ENCODE measurements at regions of chr5 and their contacts with region 1.

Region 1: DNA sequence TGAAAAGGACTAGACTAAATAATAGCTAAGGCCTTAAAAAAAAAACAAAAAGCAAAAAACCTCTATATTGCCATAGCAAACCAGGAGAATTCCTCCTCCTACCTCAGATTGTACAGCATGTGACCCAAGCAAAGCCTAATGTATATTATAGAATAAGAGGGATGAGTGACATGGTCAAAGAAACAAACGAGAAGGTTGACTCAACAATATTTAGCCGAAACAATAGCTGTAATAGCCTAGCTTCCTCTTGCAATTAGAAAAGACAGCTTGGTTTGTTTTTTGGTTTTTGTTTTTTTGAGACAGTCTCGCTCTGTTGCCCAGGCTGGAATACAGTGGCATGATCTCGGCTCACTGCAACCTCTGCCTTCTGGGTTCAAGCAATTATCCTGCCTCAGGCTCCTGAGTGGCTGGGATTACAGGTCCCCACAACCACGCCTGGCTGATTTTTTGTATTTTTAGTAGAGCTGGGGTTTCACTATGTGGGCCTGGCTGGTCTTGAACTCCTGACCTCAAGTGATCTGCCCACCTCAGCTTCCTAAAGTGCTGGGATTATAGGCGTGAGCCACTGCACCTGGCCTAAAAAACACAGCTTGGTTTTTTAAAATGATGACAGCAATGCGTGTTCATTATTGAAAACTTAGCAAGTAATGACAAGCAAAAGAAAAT is 5.6 kb downstream of the NLN start:
- DNase-seq: no peak
- H3K4me3 ChIP-seq: no peak overlapping the region
- H3K27ac ChIP-seq: no peak overlapping the region
- H3K4me1 ChIP-seq: peaks cover 2 to 16% (median 7%) of the 10 kb centered on the region in 4 experiments
- H3K27me3 ChIP-seq: no peaks in the 10 kb centered on the region

Region 2: DNA sequence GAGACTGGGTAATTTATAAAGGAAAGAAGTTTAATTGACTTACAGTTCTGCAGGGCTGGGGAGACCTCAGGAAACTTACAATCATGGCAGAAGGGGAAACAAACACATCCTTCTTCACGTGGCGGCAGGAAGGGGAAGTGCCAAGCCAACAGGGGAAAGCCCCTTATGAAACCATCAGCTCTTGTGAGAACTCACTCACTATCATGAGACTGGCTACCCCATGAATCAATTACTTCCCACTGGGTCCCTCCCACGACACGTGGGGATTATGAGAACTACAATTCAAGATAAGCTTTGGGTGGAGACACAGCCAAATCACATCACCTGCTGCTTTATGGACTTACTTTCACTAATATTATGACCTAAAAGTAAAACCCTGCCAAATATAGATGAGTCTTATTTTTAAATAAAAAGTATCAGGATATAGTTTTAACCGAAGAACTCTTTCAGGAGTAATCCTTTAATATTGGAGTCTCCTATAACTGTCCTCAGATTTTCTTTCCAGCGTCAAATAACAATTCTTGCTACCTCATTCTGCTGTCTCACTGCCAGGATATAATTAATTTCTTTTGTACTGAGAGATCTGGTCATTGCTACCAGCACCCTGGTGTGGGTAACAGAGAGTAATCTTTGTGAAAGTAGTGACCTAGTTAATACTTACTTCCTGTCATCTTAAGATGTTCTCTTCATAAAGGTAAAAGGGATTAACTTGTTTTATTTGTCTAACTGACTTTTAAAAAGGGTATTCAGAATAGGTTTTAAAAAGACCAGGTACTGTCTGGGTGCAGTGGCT is 62.9 kb after region 1 on chr5:
- CTCF ChIA-PET with region 1: no interaction called
- POLR2A ChIA-PET with region 1: interaction called, 12 read pairs
- DNase-seq: peak; percentile 32 to 88 (median 84)
- H3K4me3 ChIP-seq: no peak overlapping the region
- H3K27ac ChIP-seq: no peak overlapping the region
- H3K4me1 ChIP-seq: no peaks in the 10 kb centered on the region
- H3K27me3 ChIP-seq: no peaks in the 10 kb centered on the region